Activated naive CD4-positive, alpha-beta T cell treated with anti-CD3 and anti-CD28 coated beads for 36 hours (primary cell): ENCODE measurements at regions of chr15 and their contacts with region 1.

Region 1: DNA sequence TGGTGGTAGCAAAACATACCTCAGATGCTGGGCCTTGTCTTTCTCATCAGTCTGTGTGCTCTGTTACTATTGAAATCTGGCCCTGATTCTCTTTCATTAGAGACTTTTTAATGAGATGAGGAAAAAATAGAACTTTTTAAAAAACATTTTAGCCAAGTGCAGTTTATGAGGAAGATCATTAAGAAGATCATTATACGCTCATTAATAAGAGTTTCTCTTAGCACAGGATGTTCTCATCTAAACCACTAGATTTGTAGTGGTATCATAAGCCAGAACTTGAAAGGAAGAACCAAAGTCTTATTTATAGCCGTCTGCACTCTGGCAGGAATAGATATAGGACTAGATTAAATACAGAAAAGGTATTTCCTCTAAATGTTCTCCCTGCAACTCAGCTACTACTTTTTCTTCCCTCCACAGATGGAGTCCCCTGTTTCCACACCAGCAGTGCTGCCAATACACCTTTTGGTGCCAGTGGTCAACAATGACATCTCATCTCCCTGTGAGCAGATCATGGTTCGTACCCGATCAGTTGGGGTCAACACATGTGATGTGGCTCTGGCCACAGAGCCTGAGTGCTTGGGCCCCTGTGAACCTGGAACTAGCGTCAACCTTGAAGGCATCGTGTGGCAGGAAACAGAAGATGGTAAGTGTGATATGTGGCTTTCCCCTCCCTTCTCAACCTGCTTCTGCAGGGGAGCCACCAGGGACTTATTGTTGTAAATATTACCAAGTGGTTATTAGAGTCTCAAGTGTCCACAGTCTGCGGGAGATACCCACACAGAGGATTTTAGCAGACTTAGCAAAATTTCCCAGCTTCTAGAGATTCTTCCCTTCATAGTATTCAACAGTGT is 152.8 kb downstream of the RBPMS2 start:
- DNase-seq: peak; percentile 71
- H3K4me3 Mint-ChIP-seq: peak overlapping the region; percentile 59
- H3K27ac Mint-ChIP-seq: peak overlapping the region; percentile 96
- H3K4me1 Mint-ChIP-seq: peaks cover 95% of the 10 kb centered on the region
- H3K27me3 Mint-ChIP-seq: no peaks in the 10 kb centered on the region

Region 2: DNA sequence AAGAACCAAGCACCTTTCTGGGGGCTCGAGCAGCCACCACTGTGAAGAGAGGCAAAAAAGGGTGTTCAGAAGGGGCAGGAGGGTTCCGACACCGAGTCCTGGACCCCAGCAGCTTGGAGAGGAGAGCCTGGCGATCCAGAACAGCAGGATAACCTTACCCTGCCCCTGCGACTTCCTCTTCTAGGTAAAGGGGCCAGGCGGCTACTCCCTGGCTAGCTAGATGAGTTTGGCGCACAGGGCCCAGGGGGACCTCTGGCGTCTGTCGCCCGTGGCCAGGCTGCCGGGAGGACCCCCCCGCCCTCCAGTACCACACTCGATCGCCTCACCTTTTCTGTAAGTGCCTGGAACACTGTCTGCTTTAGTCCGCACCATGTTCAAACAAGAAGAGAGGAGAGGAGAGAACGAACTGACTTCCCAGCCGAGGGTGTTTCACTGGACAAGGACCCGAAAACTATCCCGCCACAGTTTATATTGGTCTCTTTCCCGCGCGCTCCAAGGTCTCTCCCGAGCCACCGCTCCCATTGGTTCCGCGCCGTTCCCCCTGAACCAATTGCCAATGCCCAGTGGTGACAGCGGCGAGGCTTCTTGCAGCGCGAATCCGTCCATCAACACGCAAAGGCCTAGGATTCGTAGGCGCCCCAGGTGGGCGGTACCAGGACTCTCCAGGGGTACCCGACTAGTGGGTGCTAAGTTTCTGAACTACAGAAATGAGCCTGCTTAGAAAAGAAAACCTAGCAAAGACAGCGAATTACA is 241.5 kb before region 1 on chr15 and contains the start of gene PCLAF:
- CTCF ChIA-PET with region 1: no interaction called
- intact Hi-C with region 1: loop called (anchors 2 kb)
- DNase-seq: peak; percentile 97
- H3K4me3 Mint-ChIP-seq: peak within 1 kb of the TSS; percentile 99
- H3K27ac Mint-ChIP-seq: peak within 1 kb of the TSS; percentile 92
- H3K4me1 Mint-ChIP-seq: peaks cover 19% of the 10 kb centered on the region
- H3K27me3 Mint-ChIP-seq: no peaks in the 10 kb centered on the region
- total RNA-seq, gene PCLAF: 117 to 118 TPM

Region 3: DNA sequence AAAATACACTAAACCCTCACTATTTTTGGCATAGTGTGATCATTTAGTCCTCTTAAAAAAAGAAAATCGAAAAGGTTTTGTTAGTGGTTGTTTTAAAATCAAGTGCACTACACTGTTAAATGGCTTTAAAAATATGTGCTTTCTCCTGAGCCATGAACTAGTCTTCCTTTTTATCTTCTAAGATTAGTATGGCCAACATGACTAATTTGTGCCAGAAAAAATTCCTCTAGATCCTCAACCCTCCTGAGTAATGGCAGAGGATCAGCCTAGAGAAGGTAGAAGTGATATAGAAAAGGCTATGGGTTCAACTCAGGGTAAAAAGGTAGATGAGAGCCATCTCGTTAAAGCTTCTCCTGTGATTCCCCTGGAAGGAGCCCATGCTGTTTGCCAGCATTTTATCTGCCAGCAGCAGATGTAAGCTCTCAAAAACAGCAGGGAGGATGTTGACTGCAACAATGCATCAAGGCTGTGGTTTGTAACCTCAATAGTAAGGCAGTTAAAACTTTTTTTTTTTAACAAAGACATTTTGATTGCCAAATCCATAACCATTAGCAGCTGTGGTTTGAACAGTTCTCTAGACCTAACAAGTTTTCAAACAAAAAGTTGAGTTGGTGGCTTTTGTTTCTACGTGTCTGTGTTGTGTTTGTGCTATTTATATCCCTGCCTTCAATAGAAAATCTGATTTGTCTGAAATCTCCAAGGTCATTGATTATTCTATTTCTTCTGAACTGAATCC is 192.5 kb before region 1 on chr15:
- CTCF ChIA-PET with region 1: interaction called, 4 read pairs
- intact Hi-C with region 1: loop called (anchors 1 kb)
- DNase-seq: peak; percentile 50
- H3K4me3 Mint-ChIP-seq: no peak overlapping the region
- H3K27ac Mint-ChIP-seq: peak overlapping the region; percentile 76
- H3K4me1 Mint-ChIP-seq: peaks cover 45% of the 10 kb centered on the region
- H3K27me3 Mint-ChIP-seq: no peaks in the 10 kb centered on the region

Region 4: DNA sequence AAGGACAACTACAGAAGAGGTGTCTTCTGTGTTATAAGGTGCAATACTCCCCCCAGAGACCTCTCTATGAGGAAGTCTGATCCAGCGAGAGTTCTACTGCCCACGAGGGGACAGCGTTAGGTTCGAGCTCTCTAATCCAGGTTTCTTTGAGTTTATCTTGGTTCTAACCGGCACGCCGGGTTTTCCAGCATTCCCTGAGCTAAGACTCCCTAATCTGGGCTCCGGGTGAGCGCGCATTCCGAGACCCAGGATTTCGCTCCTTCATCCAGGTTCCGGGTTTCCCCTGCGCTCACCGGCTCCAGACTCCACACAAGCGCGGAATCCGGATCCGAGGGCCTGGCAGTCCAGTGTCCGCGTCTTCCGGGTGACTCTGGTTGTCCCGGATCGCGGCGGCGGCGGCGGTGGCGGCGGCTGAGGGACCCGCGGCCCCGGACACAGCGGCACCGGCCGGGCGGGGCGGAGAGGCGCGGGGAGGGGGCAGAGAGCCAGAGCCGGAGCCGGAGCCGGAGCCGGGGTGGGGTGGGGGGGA is 162.4 kb before region 1 on chr15 and contains the start of gene ZNF609:
- CTCF ChIA-PET with region 1: no interaction called
- intact Hi-C with region 1: loop called (anchors 1 kb)
- DNase-seq: peak; percentile 94
- H3K4me3 Mint-ChIP-seq: peak within 1 kb of the TSS; percentile 85
- H3K27ac Mint-ChIP-seq: peak within 1 kb of the TSS; percentile 82
- H3K4me1 Mint-ChIP-seq: peaks cover 77% of the 10 kb centered on the region
- H3K27me3 Mint-ChIP-seq: no peaks in the 10 kb centered on the region
- total RNA-seq, gene ZNF609: 39.5 to 40.4 TPM

Region 5: DNA sequence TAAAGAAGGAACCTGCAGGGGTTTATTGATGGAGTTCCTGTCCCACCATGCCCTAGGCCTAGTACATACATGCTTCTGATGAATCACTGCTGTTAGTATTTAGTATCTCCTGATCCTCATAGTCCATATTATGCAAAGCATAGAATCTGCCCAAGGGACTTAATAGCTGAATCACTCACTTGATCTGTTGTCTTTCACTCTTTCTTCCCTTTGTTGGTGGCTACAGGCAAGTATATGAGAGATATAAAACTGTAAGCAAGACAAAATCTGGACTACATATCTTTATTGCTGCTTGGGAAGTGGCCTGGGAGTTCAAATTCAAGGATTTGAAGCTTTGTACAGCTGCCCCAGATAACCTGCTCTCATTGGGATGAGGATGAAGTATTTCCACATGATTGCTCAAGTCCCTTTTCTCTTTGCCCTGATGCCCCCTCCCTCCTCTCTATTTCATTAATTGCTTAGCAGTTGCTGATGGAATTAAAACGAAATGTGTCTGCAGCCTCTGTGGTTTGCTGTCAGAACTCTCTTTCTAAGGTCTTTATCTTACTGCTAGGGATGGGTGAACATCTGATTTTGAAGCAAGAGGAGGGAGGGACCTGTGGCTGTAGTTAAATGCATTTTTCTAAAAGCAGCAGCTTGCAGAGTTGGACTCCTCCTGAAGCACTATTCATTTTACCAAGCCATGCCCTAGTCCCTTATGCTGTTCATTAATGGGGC is 48.2 kb before region 1 on chr15:
- CTCF ChIA-PET with region 1: no interaction called
- intact Hi-C with region 1: loop called (anchors 2 kb)
- DNase-seq: no peak
- H3K4me3 Mint-ChIP-seq: no peak overlapping the region
- H3K27ac Mint-ChIP-seq: peak overlapping the region; percentile 78
- H3K4me1 Mint-ChIP-seq: peaks cover 54% of the 10 kb centered on the region
- H3K27me3 Mint-ChIP-seq: no peaks in the 10 kb centered on the region

Region 6: GRCh38 chr15:64596701-64597476 is 25.7 kb before region 1 on chr15:
- CTCF ChIA-PET with region 1: no interaction called
- intact Hi-C with region 1: loop called (anchors 1 kb)
- DNase-seq: peak; percentile 59
- H3K4me3 Mint-ChIP-seq: peak overlapping the region; percentile 71
- H3K27ac Mint-ChIP-seq: peak overlapping the region; percentile 89
- H3K4me1 Mint-ChIP-seq: peaks cover 57% of the 10 kb centered on the region
- H3K27me3 Mint-ChIP-seq: no peaks in the 10 kb centered on the region

Region 7: GRCh38 chr15:64634576-64635498 is 12.2 kb after region 1 on chr15:
- CTCF ChIA-PET with region 1: interaction called, 4 read pairs
- intact Hi-C with region 1: loop called (anchors 1 kb)
- DNase-seq: peak; percentile 60
- H3K4me3 Mint-ChIP-seq: peak overlapping the region; percentile 3
- H3K27ac Mint-ChIP-seq: peak overlapping the region; percentile 54
- H3K4me1 Mint-ChIP-seq: peaks cover 60% of the 10 kb centered on the region
- H3K27me3 Mint-ChIP-seq: no peaks in the 10 kb centered on the region